CD14-positive monocyte (primary cell): ENCODE measurements at regions of chr17 and their contacts with region 1.

Region 1: DNA sequence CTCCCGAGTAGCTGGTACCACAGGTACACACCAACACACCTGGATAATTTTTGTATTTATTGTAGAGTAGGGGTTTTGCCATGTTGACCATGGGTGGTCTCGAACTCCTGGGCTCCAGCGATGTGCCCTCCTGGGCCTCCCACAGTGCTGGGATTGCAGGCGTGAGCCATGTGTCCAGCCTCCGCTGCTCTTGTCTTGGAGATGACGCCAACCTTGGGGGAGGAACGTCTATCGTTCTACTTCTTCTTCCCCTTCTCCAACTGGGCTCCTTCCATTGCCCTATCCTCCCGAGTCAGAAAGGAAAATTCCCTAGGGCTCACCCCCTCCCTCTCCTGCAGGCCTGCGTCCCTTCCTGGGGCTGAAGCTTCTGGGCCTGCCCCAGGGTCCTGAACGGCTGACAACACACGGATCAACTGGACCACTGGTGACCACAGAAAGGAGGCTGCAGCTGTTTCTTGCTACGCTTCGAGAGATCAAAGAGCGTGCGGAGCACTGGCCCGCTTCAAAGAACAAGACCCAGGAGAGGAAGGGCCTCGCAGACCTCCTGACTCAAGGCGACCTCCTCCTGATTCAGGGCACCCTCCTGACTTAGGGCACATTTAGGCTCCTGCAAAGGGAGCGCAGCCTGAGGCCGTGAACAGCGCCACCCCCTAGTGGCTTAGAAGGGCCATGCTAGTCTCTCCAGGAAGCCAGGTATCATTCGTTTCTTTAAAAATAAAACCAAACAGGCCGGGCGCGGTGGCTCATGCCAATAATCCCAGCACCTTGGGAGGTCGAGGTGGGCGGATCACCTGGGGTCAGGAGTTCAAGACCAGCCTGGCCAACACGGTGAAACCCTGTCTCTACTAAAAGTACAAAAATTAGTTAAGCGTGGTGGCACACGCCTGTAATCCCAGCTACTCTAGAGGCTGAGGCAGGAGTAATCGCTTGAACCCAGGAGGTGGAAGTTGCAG is 48.5 kb upstream of the HELZ start:
- DNase-seq: peak; percentile 61 to 75 (median 72)
- H3K4me3 ChIP-seq: peak overlapping the region; percentile 26 to 77 (median 41)
- H3K4me3 Mint-ChIP-seq: peak overlapping the region; percentile 85 to 90
- H3K27ac ChIP-seq: peak overlapping the region in 1 of 2 donors; percentile 67
- H3K27ac Mint-ChIP-seq: peak overlapping the region in 5 of 7 donors; percentile 28 to 91 (median 85)
- H3K4me1 ChIP-seq: peaks cover 17 to 22% of the 10 kb centered on the region in 2 donors
- H3K4me1 Mint-ChIP-seq: peaks cover 23% of the 10 kb centered on the region
- H3K27me3 ChIP-seq: no peaks in the 10 kb centered on the region
- H3K27me3 Mint-ChIP-seq: peaks cover 0 to 3% (median 2%) of the 10 kb centered on the region in 3 donors
- CTCF ChIP-seq: peak; percentile 93

Region 2: GRCh38 chr17:67221062-67221998 is 72.2 kb before region 1 on chr17:
- intact Hi-C with region 1: loop called in 1 of 2 experiments (anchors 1 kb)
- DNase-seq: peak; percentile 37 to 48 (median 39)
- H3K4me3 ChIP-seq: no peak overlapping the region
- H3K4me3 Mint-ChIP-seq: no peak overlapping the region
- H3K27ac ChIP-seq: peak overlapping the region in 1 of 2 donors; percentile 56
- H3K27ac Mint-ChIP-seq: peak overlapping the region in 6 of 7 donors; percentile 4 to 79 (median 45)
- H3K4me1 ChIP-seq: peaks cover 11 to 15% of the 10 kb centered on the region in 2 donors
- H3K4me1 Mint-ChIP-seq: peaks cover 17% of the 10 kb centered on the region
- H3K27me3 ChIP-seq: no peaks in the 10 kb centered on the region
- H3K27me3 Mint-ChIP-seq: peaks cover 0 to 1% (median 0%) of the 10 kb centered on the region in 3 donors
- CTCF ChIP-seq: peak; percentile 64

Region 3: GRCh38 chr17:67239597-67239996 is 53.9 kb before region 1 on chr17:
- intact Hi-C with region 1: loop called in 1 of 2 experiments (anchors 10 kb)
- DNase-seq: no peak
- H3K4me3 ChIP-seq: no peak overlapping the region
- H3K4me3 Mint-ChIP-seq: no peak overlapping the region
- H3K27ac ChIP-seq: peak overlapping the region in 1 of 2 donors; percentile 58
- H3K27ac Mint-ChIP-seq: peak overlapping the region in 1 of 7 donors; percentile 75
- H3K4me1 ChIP-seq: peaks cover 22 to 41% of the 10 kb centered on the region in 2 donors
- H3K4me1 Mint-ChIP-seq: peaks cover 47% of the 10 kb centered on the region
- H3K27me3 ChIP-seq: no peaks in the 10 kb centered on the region
- H3K27me3 Mint-ChIP-seq: no peaks in the 10 kb centered on the region
- CTCF ChIP-seq: no peak